Cardiac septum (tissue), 1 donor: ENCODE measurements at regions of chr11 and their contacts with region 1.

Region 1: GRCh38 chr11:13303668-13304649 is 26.4 kb downstream of the BMAL1 start:
- DNase-seq: no peak

Region 2: DNA sequence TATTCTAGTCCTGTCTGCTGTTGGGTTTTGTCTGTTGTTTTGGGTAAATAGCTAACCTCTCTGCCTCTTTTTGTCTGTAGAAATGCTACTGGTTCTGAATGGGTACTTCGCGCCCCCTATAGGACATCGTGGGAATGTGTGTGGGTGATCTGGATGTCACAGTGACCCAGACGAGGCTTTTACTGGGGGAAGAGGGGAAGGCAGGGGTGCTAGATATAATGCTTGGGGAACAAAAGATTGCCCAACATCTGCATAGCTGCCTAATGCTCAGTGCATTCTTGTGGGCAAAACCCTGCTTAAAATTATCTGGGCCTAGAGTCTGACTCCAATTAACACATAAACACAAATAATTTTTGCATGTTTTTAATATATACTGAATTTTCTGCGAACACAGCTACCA is 31.4 kb after region 1 on chr11:
- intact Hi-C with region 1: loop called (anchors 5 kb)
- DNase-seq: no peak